H1 (cell line): ENCODE measurements at regions of chr17 and their contacts with region 1.

Region 1: DNA sequence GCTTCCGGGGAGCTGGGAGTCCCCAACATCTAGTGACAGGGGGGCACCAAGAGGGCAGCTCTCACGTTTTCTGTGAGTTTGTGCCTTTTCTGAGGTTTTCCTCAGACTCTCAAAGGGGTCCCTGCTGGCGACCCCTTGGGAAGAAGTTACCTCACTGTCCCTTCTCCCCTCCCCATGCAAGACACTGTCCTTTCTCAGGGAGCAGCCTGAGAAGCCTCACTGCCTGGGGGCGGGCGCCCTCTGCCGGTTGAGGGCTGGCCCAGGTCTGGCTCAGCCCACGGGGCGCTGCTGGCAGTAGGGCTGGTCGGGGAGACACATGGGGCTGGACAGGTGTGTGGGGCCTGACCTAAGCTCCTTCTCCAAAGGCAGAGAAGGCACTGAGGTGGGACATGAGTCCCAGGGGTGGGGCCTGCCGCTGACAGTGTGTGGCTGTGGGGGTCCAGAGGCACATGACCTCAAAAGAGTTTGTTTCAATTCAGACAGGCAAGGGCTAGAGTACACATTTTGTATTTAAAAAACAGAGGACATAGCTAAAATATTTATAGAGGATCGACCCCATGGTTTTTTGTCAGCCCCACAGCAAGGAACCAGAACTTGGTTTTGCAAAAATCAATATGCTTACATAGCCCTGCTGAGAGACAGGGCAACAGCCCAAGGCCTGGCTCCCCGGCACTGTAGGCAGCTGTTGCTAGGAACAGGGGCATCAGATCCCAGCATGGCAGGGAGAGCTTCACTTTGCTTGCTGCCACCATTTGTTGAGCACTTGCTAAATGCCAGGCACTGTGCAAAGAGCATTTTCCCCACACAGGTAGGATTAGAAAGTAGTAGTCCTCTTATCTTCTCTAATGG is 18.5 kb upstream of the ALDH3A1 start:
- DNase-seq: peak; percentile 49 to 94
- H3K4me3 ChIP-seq: no peak overlapping the region
- H3K27ac ChIP-seq: no peak overlapping the region
- H3K4me1 ChIP-seq: peaks cover 0 to 5% (median 0%) of the 10 kb centered on the region in 4 experiments; a peak in 2 of 7 replicates
- H3K27me3 ChIP-seq: no peaks in the 10 kb centered on the region
- CTCF ChIP-seq: peak; percentile 96 to 98 (median 97)
- EP300 ChIP-seq: no peak
- POLR2A ChIP-seq: no peak
- RAD21 ChIP-seq: peak; percentile 97 to 99

Region 2: GRCh38 chr17:19513897-19514488 is 252.7 kb before region 1 on chr17:
- CTCF ChIA-PET with region 1: interaction called, 52 read pairs
- POLR2A ChIA-PET with region 1: no interaction called
- DNase-seq: peak in 1 of 2 experiments; percentile 84
- H3K4me3 ChIP-seq: no peak overlapping the region
- H3K27ac ChIP-seq: no peak overlapping the region
- H3K4me1 ChIP-seq: peaks cover 0 to 3% (median 0%) of the 10 kb centered on the region in 4 experiments; a peak in 1 of 7 replicates
- H3K27me3 ChIP-seq: no peaks in the 10 kb centered on the region
- CTCF ChIP-seq: peak; percentile 83 to 95 (median 95)
- EP300 ChIP-seq: no peak
- POLR2A ChIP-seq: no peak
- RAD21 ChIP-seq: peak; percentile 95 to 97

Region 3: DNA sequence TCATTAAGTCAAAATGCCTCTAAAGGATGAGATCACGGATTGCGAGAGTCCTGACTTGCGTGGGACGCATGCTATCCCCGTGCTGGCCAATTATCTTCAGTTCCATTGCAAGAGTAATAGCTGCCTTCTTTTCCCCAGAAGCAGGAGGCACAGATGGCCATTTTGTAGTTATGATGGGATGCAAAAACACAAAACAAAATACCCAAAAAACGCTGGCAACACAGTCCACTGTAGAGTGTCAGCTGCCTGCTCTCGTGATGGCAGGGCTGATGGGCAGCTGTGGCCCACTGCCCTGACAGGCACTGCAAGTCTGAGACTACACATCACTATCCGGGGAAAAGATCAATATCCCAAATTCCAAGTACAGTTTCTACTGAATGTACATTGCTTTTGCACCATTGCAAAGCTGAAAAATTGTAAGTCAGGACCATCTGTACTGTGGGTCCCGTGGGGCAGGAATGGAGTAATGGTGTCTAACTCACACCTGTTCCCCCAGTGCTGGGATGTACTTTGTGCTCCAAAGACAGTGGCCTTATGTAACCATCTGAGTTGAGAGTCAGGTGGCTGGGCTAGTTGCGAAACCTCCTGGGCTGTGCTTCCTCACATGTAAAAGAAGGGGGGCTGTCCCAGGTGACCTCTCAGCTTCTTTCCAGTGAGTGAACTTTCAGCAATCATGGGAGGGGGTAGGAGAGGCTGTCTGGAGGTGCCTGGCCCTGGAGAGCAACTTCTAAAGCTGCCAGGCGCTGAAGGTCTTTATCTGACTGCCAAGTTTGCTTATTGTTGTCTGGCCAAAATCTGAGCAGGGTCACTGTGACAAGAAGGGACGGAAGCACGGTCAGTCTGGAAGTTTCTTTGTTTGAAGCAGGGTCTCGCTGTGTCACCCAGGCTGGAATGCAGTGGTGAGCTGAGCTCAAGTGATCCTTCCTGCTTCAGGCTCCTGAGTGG is 228.3 kb before region 1 on chr17:
- CTCF ChIA-PET with region 1: interaction called, 10 read pairs
- POLR2A ChIA-PET with region 1: no interaction called
- DNase-seq: no peak
- H3K4me3 ChIP-seq: no peak overlapping the region
- H3K27ac ChIP-seq: no peak overlapping the region
- H3K4me1 ChIP-seq: peaks cover under 1 to 11% (median 5%) of the 10 kb centered on the region in 4 experiments; a peak in 6 of 7 replicates
- H3K27me3 ChIP-seq: peaks cover 11 to 22% (median 18%) of the 10 kb centered on the region in 4 experiments
- CTCF ChIP-seq: no peak
- EP300 ChIP-seq: no peak
- POLR2A ChIP-seq: no peak
- RAD21 ChIP-seq: no peak

Region 4: DNA sequence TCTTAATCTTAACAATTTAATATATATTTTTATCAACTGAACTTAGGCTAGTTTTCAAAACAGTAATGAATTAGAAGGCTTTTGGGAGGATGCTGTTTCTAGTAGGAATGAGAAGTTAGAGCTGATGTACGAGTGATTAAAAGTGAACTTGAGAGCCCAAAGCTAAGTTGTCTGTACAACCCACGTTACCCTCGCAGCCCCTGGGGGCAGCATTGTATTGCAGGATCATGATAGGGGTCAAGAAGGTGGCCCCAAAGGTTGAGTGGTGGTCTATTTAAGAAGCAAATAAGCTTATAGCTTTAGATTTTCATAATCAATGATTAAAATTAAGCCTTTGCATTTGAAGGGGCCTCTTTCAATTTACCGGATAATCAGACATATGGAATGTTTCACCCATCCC is 151.7 kb before region 1 on chr17:
- CTCF ChIA-PET with region 1: interaction called, 23 read pairs
- POLR2A ChIA-PET with region 1: no interaction called
- DNase-seq: no peak
- H3K4me3 ChIP-seq: no peak overlapping the region
- H3K27ac ChIP-seq: no peak overlapping the region
- H3K4me1 ChIP-seq: no peaks in the 10 kb centered on the region
- H3K27me3 ChIP-seq: no peaks in the 10 kb centered on the region
- CTCF ChIP-seq: peak; percentile 32 to 48 (median 44); a peak in 3 of 4 replicates
- EP300 ChIP-seq: no peak
- POLR2A ChIP-seq: no peak
- RAD21 ChIP-seq: peak; percentile 46 to 60

Region 5: GRCh38 chr17:19656851-19657581 is 109.6 kb before region 1 on chr17:
- CTCF ChIA-PET with region 1: interaction called, 15 read pairs
- POLR2A ChIA-PET with region 1: no interaction called
- DNase-seq: no peak
- H3K4me3 ChIP-seq: no peak overlapping the region
- H3K27ac ChIP-seq: no peak overlapping the region
- H3K4me1 ChIP-seq: no peaks in the 10 kb centered on the region
- H3K27me3 ChIP-seq: no peaks in the 10 kb centered on the region
- CTCF ChIP-seq: no peak
- EP300 ChIP-seq: no peak
- POLR2A ChIP-seq: no peak
- RAD21 ChIP-seq: no peak

Region 6: DNA sequence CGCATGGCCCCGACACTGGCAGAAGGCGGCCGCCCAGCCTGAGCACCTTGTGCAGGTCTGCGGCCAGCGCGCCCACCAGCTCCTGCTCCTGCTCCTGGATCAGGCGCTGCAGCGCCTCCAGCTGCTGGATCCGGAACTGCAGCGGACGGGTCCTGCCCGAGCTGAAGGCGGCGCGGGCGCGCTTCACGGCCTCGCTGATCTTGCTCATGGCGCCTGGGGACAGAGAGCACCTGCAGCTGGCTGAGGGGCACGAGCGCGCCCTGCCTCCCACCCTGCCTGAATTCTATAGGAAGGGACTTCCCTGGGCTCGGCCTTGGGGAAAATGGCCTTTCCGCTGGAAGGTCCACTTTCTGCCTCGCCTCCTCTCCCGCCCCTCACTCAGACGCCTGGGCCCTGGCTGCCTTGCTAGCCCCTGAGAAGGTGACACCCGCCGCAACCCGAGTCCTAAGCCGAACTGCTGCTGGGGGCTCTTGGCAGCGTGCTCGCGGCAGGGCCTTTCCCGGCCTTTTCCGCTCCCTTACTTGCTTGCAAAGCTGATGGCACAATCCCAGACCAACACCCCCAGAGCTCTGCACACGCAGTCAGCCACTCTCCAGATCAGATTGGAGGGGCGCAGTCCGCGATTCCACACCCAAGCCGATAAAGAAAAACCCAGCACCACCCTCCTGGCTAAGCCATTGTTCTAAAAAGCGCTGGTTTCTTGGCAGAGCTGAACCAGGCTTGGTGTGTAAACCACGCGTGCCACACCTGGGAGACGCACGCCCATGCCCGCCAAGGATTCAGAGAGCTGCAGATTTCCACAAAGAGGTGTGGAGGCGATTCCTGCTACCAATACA is 21.5 kb before region 1 on chr17:
- CTCF ChIA-PET with region 1: interaction called, 44 read pairs
- POLR2A ChIA-PET with region 1: interaction called, 3 read pairs
- DNase-seq: peak; percentile 86 to 100
- H3K4me3 ChIP-seq: peak overlapping the region; percentile 24 to 59 (median 40); a peak in 7 of 8 replicates
- H3K27ac ChIP-seq: no peak overlapping the region
- H3K4me1 ChIP-seq: peaks cover 0 to 9% (median 5%) of the 10 kb centered on the region in 4 experiments; a peak in 5 of 7 replicates
- H3K27me3 ChIP-seq: peaks cover 0 to 6% (median 1%) of the 10 kb centered on the region in 4 experiments; a peak in 4 of 7 replicates
- CTCF ChIP-seq: peak; percentile 92 to 96 (median 94)
- EP300 ChIP-seq: no peak
- POLR2A ChIP-seq: peak in 1 of 2 experiments; percentile 90; a peak in 2 of 3 replicates
- RAD21 ChIP-seq: peak; percentile 64 to 73

Region 7: GRCh38 chr17:19753049-19753444 is 13.6 kb before region 1 on chr17:
- CTCF ChIA-PET with region 1: interaction called, 36 read pairs
- POLR2A ChIA-PET with region 1: no interaction called
- DNase-seq: no peak
- H3K4me3 ChIP-seq: no peak overlapping the region
- H3K27ac ChIP-seq: no peak overlapping the region
- H3K4me1 ChIP-seq: no peaks in the 10 kb centered on the region; a peak in 3 of 7 replicates
- H3K27me3 ChIP-seq: no peaks in the 10 kb centered on the region
- CTCF ChIP-seq: no peak
- EP300 ChIP-seq: no peak
- POLR2A ChIP-seq: no peak
- RAD21 ChIP-seq: no peak